ENCODE measurements at regions of chr15 and their contacts with region 1.

Region 1: DNA sequence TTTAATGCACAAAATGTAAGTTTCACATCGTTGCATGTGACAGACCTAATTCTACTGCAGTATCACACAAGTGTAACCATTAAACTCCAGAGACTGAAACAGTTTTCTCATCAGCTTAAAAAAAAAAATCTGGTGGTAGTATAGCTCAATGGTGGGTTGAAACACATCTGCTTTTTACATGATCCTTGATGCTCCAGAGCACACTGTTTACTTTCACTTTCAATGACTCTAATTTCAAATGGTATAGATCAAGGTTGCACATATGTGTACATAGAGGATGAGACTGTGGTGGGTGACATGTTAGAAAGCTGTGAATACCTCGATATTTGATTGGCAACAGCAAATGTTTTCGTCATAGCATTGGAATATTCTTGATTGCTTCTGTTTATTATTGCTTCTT is 22.4 kb downstream of the MCTP2 start:
- DNase-seq: no peak
- ATAC-seq: peak; percentile 83
- H3K4me3 ChIP-seq: no peak overlapping the region
- H3K27ac ChIP-seq: no peak overlapping the region
- H3K4me1 ChIP-seq: no peaks in the 10 kb centered on the region
- H3K27me3 ChIP-seq: no peaks in the 10 kb centered on the region
- CTCF ChIP-seq: no peak
- EP300 ChIP-seq: no peak
- POLR2A ChIP-seq: no peak
- RAD21 ChIP-seq: no peak

Region 2: DNA sequence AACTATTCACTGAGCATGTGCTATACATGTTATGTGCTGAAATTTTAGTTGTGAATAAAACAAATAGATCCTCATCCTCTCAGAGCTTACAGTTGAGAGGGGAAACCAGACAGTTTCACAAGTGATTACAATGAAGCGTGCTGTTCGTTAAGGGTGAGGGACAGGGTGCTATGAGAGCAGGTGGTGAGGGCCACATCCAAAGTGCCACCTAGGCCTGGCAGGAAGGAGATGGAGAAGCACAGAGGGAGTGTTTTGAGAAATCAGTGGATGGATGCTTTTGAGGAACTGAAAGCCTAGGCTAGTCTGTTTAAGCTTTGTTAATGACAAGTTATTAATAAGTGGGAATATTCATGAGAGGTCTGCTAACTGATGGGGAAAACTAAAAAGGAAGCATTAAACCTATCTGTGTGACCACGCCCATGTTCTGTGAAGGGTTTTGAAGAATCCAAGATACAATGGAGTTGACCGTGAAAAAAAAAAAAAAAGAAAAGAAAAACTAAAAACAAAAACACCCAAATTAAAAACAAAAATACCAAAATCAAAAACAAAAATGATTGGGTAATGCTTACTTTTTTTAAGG is 15.1 kb before region 1 on chr15:
- CTCF ChIA-PET with region 1: interaction called, 6 read pairs
- POLR2A ChIA-PET with region 1: interaction called, 8 read pairs
- RAD21 ChIA-PET with region 1: interaction called, 63 read pairs
- SMC1A ChIA-PET with region 1: interaction called, 83 read pairs
- in situ Hi-C with region 1: no loop called
- intact Hi-C with region 1: no loop called
- DNase-seq: no peak
- ATAC-seq: peak; percentile 85
- H3K4me3 ChIP-seq: no peak overlapping the region
- H3K27ac ChIP-seq: no peak overlapping the region
- H3K4me1 ChIP-seq: 0 out of 2 replicates have a peak, but pooled peaks cover 5% of the 10 kb centered on the region
- H3K27me3 ChIP-seq: no peaks in the 10 kb centered on the region
- CTCF ChIP-seq: no peak
- EP300 ChIP-seq: peak in 1 of 2 experiments; percentile 25; a peak in 1 of 4 replicates
- POLR2A ChIP-seq: no peak
- RAD21 ChIP-seq: no peak

Region 3: GRCh38 chr15:94352636-94353487 is 99.1 kb after region 1 on chr15:
- CTCF ChIA-PET with region 1: no interaction called
- POLR2A ChIA-PET with region 1: no interaction called
- RAD21 ChIA-PET with region 1: no interaction called
- SMC1A ChIA-PET with region 1: no interaction called
- in situ Hi-C with region 1: no loop called
- intact Hi-C with region 1: no loop called
- DNase-seq: no peak
- ATAC-seq: no peak
- H3K4me3 ChIP-seq: no peak overlapping the region
- H3K27ac ChIP-seq: no peak overlapping the region
- H3K4me1 ChIP-seq: no peaks in the 10 kb centered on the region
- H3K27me3 ChIP-seq: no peaks in the 10 kb centered on the region
- CTCF ChIP-seq: no peak
- EP300 ChIP-seq: no peak
- POLR2A ChIP-seq: no peak
- RAD21 ChIP-seq: no peak